ENCODE measurements at regions of chr5 and their contacts with region 1.

Region 1: GRCh38 chr5:93915142-93915553 is 173.7 kb upstream of the POU5F2 start:
- DNase-seq: no peak
- ATAC-seq: no peak
- H3K4me3 ChIP-seq: no peak overlapping the region
- H3K27ac ChIP-seq: no peak overlapping the region
- H3K4me1 ChIP-seq: no peaks in the 10 kb centered on the region
- H3K27me3 ChIP-seq: no peaks in the 10 kb centered on the region
- CTCF ChIP-seq: peak; percentile 20 to 60 (median 46)
- POLR2A ChIP-seq: no peak

Region 2: DNA sequence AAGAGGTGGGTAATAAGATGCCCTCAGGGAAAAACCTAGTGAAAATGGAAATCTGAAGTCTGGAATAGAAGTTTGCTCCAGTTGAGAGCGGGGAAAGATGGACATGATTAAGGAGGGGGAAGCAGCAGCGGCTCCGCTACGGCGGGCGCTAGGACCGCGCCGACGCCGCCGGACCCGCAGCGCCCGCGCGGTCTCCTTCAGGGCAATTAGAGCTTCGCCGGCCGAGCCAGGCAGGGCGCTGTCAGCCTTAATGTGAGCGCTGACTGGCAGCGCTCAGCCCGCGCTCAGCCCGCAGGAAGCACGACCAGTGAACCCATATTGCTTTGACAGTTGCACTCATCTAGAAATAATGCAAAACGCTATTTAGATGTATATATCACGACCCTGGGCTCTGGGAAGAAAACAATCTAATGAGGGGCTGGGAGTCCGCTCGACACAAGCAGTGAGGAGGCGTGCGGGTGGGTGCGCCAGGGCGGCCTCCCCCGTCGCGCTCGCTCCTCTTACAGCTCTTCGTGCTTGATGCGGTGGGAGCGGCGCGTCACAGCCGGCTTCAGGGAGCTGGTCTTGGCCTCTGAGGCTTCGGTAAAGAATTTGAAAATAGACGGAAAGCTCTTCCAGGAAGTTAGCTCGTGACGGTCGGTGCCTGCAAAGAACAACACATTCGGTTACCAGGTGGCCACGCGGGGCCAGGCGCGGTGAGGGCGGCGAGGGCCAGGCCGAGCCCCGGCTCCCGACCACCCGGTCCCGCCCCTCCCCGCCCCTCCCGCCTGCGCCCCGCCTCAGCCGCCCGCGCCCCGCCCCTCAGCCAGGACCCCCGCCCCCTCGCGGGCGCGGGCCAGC is 294.4 kb before region 1 on chr5:
- in situ Hi-C with region 1: loop called in 1 of 4 experiments (anchors 25 kb)
- intact Hi-C with region 1: no loop called
- DNase-seq: no peak
- ATAC-seq: peak; percentile 75 to 79
- H3K4me3 ChIP-seq: peak overlapping the region; percentile 71 to 81 (median 74)
- H3K27ac ChIP-seq: peak overlapping the region; percentile 58 to 63 (median 60)
- H3K4me1 ChIP-seq: peaks cover 0 to 10% of the 10 kb centered on the region in 2 donors
- H3K27me3 ChIP-seq: peaks cover 0 to 6% (median 6%) of the 10 kb centered on the region in 3 donors
- CTCF ChIP-seq: no peak
- POLR2A ChIP-seq: no peak